Endothelial cell of umbilical vein (primary cell): ENCODE measurements at regions of chr1 and their contacts with region 1.

Region 1: GRCh38 chr1:230310381-230311163 is 115.6 kb downstream of the PGBD5 start:
- DNase-seq: peak; percentile 68
- H3K4me3 ChIP-seq: no peak overlapping the region
- H3K27ac ChIP-seq: no peak overlapping the region
- H3K4me1 ChIP-seq: peaks cover 8% of the 10 kb centered on the region
- H3K27me3 ChIP-seq: no peaks in the 10 kb centered on the region
- CTCF ChIP-seq: peak; percentile 80 to 87
- POLR2A ChIP-seq: no peak

Region 2: DNA sequence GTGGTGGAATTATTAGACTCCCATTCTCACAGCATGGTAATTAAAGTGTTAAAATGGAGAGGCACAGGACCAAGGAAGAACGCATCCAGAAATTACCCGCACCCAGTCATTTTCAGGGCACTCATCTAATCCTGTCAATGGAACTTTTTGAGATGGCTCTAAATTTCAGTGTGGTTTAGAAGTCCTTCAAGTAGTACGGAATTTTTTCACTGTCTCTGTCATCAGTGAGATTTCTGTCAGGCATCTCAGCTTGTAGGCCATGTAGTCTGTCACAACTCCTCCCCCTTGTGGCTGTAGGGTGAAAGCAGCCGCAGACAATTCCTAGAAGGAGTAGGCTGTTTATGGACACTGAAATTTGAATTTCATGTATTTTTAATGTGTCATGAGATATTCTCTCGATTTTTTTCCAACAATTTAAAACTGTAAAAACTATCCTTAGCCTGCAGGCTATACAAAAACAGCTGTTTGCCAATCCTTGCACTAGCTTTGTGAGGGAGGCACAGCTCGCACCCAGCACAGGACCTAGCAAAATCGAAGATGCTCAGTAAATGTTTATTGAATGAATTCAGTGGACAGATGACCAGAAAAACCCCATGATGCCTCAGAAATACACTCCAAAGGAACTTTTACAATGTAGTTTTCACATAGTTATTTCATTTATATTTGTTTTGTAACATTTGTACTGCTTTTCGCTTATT is 795.8 kb before region 1 on chr1:
- CTCF ChIA-PET with region 1: no interaction called
- POLR2A ChIA-PET with region 1: no interaction called
- dilution Hi-C with region 1: no loop called
- intact Hi-C with region 1: loop called (anchors 1 kb)
- DNase-seq: peak; percentile 67
- H3K4me3 ChIP-seq: no peak overlapping the region
- H3K27ac ChIP-seq: no peak overlapping the region
- H3K4me1 ChIP-seq: no peaks in the 10 kb centered on the region
- H3K27me3 ChIP-seq: no peaks in the 10 kb centered on the region
- CTCF ChIP-seq: peak; percentile 77 to 86
- POLR2A ChIP-seq: no peak

Region 3: GRCh38 chr1:229714964-229715603 is 595.5 kb before region 1 on chr1:
- CTCF ChIA-PET with region 1: interaction called, 10 read pairs
- POLR2A ChIA-PET with region 1: no interaction called
- dilution Hi-C with region 1: no loop called
- intact Hi-C with region 1: loop called (anchors 1 kb)
- DNase-seq: peak; percentile 32
- H3K4me3 ChIP-seq: no peak overlapping the region
- H3K27ac ChIP-seq: no peak overlapping the region
- H3K4me1 ChIP-seq: no peaks in the 10 kb centered on the region
- H3K27me3 ChIP-seq: no peaks in the 10 kb centered on the region
- CTCF ChIP-seq: peak; percentile 30 to 33
- POLR2A ChIP-seq: no peak

Region 4: GRCh38 chr1:229972600-229973296 is 337.8 kb before region 1 on chr1:
- CTCF ChIA-PET with region 1: interaction called, 3 read pairs
- POLR2A ChIA-PET with region 1: no interaction called
- dilution Hi-C with region 1: no loop called
- intact Hi-C with region 1: loop called (anchors 2 kb)
- DNase-seq: peak; percentile 9
- H3K4me3 ChIP-seq: no peak overlapping the region
- H3K27ac ChIP-seq: no peak overlapping the region
- H3K4me1 ChIP-seq: no peaks in the 10 kb centered on the region
- H3K27me3 ChIP-seq: no peaks in the 10 kb centered on the region
- CTCF ChIP-seq: peak; percentile 9 to 37
- POLR2A ChIP-seq: no peak

Region 5: GRCh38 chr1:230215031-230215430 is 95.5 kb before region 1 on chr1:
- CTCF ChIA-PET with region 1: interaction called, 5 read pairs
- POLR2A ChIA-PET with region 1: no interaction called
- dilution Hi-C with region 1: no loop called
- intact Hi-C with region 1: loop called (anchors 1 kb)
- DNase-seq: peak; percentile 92
- H3K4me3 ChIP-seq: no peak overlapping the region
- H3K27ac ChIP-seq: peak overlapping the region; percentile 33
- H3K4me1 ChIP-seq: peaks cover 27% of the 10 kb centered on the region
- H3K27me3 ChIP-seq: no peaks in the 10 kb centered on the region
- CTCF ChIP-seq: peak; percentile 70 to 87
- POLR2A ChIP-seq: no peak

Region 6: GRCh38 chr1:230430499-230430898 is 119.9 kb after region 1 on chr1:
- CTCF ChIA-PET with region 1: no interaction called
- POLR2A ChIA-PET with region 1: no interaction called
- dilution Hi-C with region 1: no loop called
- intact Hi-C with region 1: no loop called
- DNase-seq: no peak
- H3K4me3 ChIP-seq: no peak overlapping the region
- H3K27ac ChIP-seq: no peak overlapping the region
- H3K4me1 ChIP-seq: no peaks in the 10 kb centered on the region
- H3K27me3 ChIP-seq: peaks cover 0 to 4% of the 10 kb centered on the region in 2 experiments
- CTCF ChIP-seq: no peak
- POLR2A ChIP-seq: no peak

Region 7: DNA sequence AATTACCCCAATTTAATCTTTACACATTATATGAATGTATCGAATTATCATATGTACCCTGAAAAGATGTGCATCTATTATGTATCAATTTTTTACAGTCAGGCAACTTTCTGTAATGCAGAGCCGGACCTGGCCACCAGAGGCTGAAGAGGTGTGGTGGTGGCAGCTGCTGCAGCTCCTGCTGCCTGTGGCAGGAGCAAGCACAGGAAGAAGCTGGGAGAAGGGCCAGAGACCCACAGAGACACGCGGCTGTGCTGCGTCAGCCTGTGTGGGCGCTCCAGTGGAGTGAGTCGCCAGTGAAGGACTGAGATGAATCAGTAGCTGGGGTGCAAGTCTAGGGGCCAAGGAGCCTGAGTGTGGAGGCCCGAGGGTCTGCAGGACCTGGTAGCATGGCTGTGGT is 257.4 kb after region 1 on chr1:
- CTCF ChIA-PET with region 1: no interaction called
- POLR2A ChIA-PET with region 1: no interaction called
- dilution Hi-C with region 1: no loop called
- intact Hi-C with region 1: no loop called
- DNase-seq: no peak
- H3K4me3 ChIP-seq: no peak overlapping the region
- H3K27ac ChIP-seq: no peak overlapping the region
- H3K4me1 ChIP-seq: no peaks in the 10 kb centered on the region
- H3K27me3 ChIP-seq: no peaks in the 10 kb centered on the region
- CTCF ChIP-seq: no peak
- POLR2A ChIP-seq: no peak